ENCODE measurements at regions of chr17 and their contacts with region 1.

Region 1: DNA sequence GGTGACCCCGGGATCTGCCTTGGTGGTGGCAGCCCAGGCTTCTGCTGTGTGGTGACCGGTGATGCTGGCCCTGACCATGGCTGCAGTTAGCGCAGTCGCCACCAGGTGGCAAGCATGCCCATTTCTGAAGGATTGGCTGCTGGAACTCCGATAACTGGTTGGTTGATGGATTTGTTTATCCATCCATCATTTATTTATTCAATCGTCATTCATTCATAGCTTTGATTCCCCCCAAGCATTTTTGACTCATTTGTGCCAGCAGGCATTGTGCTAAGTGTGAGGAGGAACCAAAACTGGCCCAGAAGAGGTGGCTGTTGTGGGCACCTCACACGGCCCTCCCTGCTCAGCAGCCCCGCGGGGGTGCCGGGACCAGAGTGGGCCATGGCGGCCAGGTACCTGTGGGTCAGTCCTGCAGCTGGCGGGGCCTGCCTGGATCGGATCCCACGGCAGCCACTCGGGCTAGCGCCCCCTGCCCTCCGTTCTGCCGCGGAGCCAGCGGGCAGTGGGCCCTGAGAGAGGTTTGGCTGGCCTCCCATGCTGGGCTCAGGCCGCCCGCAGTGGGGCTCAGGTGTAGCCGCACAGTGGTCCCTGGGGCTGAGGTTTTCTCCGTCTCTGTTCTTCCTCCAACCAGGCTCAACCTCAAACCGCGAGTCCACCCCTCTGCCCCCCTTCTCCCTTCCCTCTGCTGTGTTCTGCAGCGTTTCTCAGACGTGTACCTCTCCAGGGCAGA is 28.8 kb upstream of the ITGA3 start:
- DNase-seq: peak; percentile 88 to 96
- ATAC-seq: peak; percentile 90
- H3K4me3 ChIP-seq: peak overlapping the region; percentile 1 to 23
- H3K27ac ChIP-seq: peak overlapping the region; percentile 20 to 57
- H3K4me1 ChIP-seq: no peaks in the 10 kb centered on the region
- H3K27me3 ChIP-seq: no peaks in the 10 kb centered on the region

Region 2: DNA sequence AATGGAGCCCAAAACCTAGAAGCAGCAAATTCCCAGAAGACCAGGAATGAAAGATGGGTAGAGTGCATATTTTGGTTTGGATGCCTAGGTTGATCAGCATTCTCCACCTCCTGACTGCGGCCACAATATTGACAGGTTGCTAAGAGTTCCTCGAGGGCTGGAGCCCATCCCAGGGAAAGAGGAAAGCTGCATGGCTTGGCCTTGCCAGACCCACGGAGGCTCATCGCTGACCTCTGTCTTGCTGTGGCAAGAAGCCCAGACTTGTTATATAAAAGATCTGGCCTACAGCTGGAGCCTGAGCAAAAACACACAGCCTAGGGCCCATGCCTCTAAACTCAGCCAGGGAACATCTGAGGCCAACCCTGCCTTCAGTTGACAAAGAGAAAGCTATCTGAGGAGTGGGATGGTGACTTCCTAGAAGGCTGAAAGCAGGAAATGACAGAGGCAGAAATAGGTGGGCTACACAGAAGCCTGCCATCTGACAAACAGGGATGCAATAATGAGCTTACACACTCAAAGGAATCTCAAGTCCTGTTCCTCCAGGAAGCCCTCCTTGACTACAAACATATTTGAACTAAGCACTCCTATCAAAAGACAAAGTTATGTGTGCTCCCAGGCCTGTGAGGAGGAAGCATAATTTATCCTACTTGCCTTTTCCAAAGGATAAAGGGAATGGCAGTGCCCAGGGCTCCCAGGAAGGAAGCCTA is 296.8 kb before region 1 on chr17:
- intact Hi-C with region 1: no loop called
- DNase-seq: peak; percentile 84
- ATAC-seq: peak; percentile 95
- H3K4me3 ChIP-seq: no peak overlapping the region
- H3K27ac ChIP-seq: peak overlapping the region; percentile 31 to 88
- H3K4me1 ChIP-seq: no peaks in the 10 kb centered on the region
- H3K27me3 ChIP-seq: no peaks in the 10 kb centered on the region

Region 3: DNA sequence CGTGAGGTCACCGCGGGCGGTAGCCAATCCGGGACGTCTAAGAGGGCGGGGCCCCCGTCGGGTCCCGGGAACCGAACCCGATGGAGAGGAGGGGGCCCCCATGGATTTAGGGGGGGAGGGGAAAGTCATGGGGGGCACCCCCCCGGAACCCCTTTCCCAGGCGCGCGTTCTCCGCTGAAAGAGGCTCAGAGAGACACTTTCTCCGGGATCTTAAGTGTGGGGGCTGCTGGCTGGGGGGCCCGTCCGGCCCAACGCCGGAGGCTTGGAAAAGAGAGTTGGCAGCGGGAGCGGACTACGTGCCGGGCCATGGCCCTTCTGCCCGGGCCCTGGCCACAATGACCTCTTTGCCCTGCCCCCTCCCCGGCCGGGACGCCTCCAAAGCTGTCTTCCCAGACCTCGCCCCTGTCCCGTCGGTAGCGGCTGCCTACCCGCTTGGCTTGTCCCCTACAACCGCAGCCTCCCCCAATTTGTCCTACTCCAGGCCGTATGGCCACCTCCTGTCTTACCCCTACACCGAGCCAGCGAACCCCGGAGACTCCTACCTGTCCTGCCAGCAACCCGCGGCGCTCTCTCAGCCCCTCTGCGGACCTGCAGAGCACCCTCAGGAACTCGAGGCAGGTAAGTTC is 57.8 kb before region 1 on chr17 and contains the start of gene DLX4:
- intact Hi-C with region 1: no loop called
- DNase-seq: peak in 1 of 2 donors; percentile 87
- ATAC-seq: no peak
- H3K4me3 ChIP-seq: peak within 1 kb of the TSS in 1 of 2 donors; percentile 1
- H3K27ac ChIP-seq: no peak within 1 kb of the TSS
- H3K4me1 ChIP-seq: no peaks in the 10 kb centered on the region
- H3K27me3 ChIP-seq: no peaks in the 10 kb centered on the region
- total RNA-seq, gene DLX4: 0.39 TPM in 1 of 2 donors, not detected in the other

Region 4: DNA sequence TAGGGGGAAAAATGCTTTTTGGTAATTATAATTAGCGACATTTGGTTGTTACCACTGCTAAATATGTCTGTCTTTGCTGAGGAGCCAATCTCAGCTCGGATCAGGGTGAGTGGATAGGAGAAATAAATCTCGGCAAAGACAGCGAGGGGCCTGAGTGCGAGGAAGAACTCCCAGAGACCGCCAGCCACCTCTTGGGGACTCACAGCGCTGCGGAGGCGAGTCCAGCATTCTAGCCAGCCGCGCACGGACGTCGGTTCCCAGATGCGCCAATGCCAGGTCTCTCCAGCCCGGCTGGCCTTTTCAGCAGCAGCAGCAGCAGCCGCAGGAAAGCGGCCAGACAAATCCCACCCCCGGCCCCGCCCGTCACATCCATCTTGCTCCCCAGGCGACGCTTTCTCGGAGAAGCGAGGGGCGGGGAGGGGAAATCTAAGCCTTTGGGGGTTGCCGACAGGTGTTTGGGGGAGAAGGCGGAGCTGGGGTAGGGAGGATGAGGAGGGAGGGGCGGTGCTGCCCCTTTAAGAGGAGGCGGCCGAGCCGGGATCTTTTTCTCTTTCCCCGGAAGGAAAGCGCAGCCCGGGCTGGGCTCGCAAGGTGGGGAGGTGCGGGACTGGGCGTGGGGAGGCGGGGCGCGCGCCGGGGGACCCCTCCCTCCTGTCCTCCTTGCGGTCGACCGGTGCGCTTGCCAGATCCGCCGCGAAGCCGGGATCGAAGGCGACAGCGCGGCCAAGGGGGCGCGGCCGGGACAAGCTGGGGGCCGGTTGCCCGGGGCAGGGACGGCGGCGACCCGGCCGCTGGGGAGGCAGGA is 28.6 kb after region 1 on chr17 and contains the start of gene ITGA3:
- intact Hi-C with region 1: loop called (anchors 2 kb)
- DNase-seq: peak; percentile 90 to 94
- ATAC-seq: peak; percentile 74
- H3K4me3 ChIP-seq: peak within 1 kb of the TSS; percentile 74 to 76
- H3K27ac ChIP-seq: peak within 1 kb of the TSS; percentile 74 to 95
- H3K4me1 ChIP-seq: peaks cover 6 to 10% of the 10 kb centered on the region in 2 donors
- H3K27me3 ChIP-seq: no peaks in the 10 kb centered on the region
- total RNA-seq, gene ITGA3: 113 to 150 TPM

Region 5: GRCh38 chr17:50087246-50087911 is 60.3 kb after region 1 on chr17:
- intact Hi-C with region 1: loop called (anchors 1 to 2 kb)
- DNase-seq: peak; percentile 82 to 89
- ATAC-seq: peak; percentile 79
- H3K4me3 ChIP-seq: no peak overlapping the region
- H3K27ac ChIP-seq: peak overlapping the region in 1 of 2 donors; percentile 10
- H3K4me1 ChIP-seq: no peaks in the 10 kb centered on the region
- H3K27me3 ChIP-seq: no peaks in the 10 kb centered on the region